Dorsolateral prefrontal cortex (tissue), 120 donors: ENCODE measurements at regions of chr1 and their contacts with region 1.

Region 1: GRCh38 chr1:1906185-1907097 is 8.6 kb upstream of the CALML6 start:
- DNase-seq: peak; percentile 73 to 89 (median 84)
- H3K4me3 ChIP-seq: peak overlapping the region in 1 of 59 donors; percentile 19
- H3K27ac ChIP-seq: peak overlapping the region in 48 of 59 donors; percentile 2 to 80 (median 54)
- H3K27me3 ChIP-seq: no peaks in the 10 kb centered on the region
- CTCF ChIP-seq: peak; percentile 51 to 95 (median 88)

Region 2: GRCh38 chr1:1763657-1764616 is 142.5 kb before region 1 on chr1:
- intact Hi-C with region 1: loop called in 1 of 2 experiments (anchors 5 kb)
- DNase-seq: peak in 9 of 10 donors; percentile 59 to 84 (median 77)
- H3K4me3 ChIP-seq: peak overlapping the region in 3 of 59 donors; percentile 2 to 4 (median 4)
- H3K27ac ChIP-seq: peak overlapping the region in 49 of 59 donors; percentile 3 to 77 (median 48)
- H3K27me3 ChIP-seq: no peaks in the 10 kb centered on the region
- CTCF ChIP-seq: peak in 52 of 56 donors; percentile 18 to 74 (median 46)

Region 3: GRCh38 chr1:1777950-1778662 is 128.3 kb before region 1 on chr1 and contains the start of gene NADK:
- intact Hi-C with region 1: loop called (anchors 5 kb)
- DNase-seq: peak in 4 of 10 donors; percentile 38 to 86 (median 53)
- H3K4me3 ChIP-seq: peak within 1 kb of the TSS; percentile 50 to 97 (median 90)
- H3K27ac ChIP-seq: peak within 1 kb of the TSS in 55 of 59 donors; percentile 38 to 92 (median 75)
- H3K27me3 ChIP-seq: no peaks in the 10 kb centered on the region
- CTCF ChIP-seq: peak in 6 of 56 donors; percentile 8 to 27 (median 18)
- total RNA-seq, gene NADK: 37.6 to 88.4 (median 49.0) TPM

Region 4: GRCh38 chr1:1841575-1841995 is 64.9 kb before region 1 on chr1:
- intact Hi-C with region 1: no loop called
- DNase-seq: no peak
- H3K4me3 ChIP-seq: peak overlapping the region in 30 of 59 donors; percentile 1 to 43 (median 16)
- H3K27ac ChIP-seq: peak overlapping the region in 58 of 59 donors; percentile 12 to 92 (median 81)
- H3K27me3 ChIP-seq: no peaks in the 10 kb centered on the region
- CTCF ChIP-seq: peak in 14 of 56 donors; percentile 11 to 30 (median 18)